ENCODE measurements at regions of chr4 and their contacts with region 1.

Region 1: GRCh38 chr4:127782274-127783025 is at the start of gene HSPA4L:
- DNase-seq: peak; percentile 64
- H3K4me3 Mint-ChIP-seq: peak within 1 kb of the TSS; percentile 91
- H3K27ac Mint-ChIP-seq: peak within 1 kb of the TSS; percentile 97
- H3K4me1 Mint-ChIP-seq: peaks cover 32% of the 10 kb centered on the region
- H3K27me3 Mint-ChIP-seq: peaks cover 65% of the 10 kb centered on the region
- total RNA-seq, gene HSPA4L: 2.5 and 3.8 TPM in 2 replicates

Region 2: GRCh38 chr4:127622921-127623656 is 159.4 kb before region 1 on chr4:
- intact Hi-C with region 1: loop called (anchors 5 kb)
- DNase-seq: no peak
- H3K4me3 Mint-ChIP-seq: no peak overlapping the region
- H3K27ac Mint-ChIP-seq: no peak overlapping the region
- H3K4me1 Mint-ChIP-seq: peaks cover 7% of the 10 kb centered on the region
- H3K27me3 Mint-ChIP-seq: peaks cover 29% of the 10 kb centered on the region

Region 3: DNA sequence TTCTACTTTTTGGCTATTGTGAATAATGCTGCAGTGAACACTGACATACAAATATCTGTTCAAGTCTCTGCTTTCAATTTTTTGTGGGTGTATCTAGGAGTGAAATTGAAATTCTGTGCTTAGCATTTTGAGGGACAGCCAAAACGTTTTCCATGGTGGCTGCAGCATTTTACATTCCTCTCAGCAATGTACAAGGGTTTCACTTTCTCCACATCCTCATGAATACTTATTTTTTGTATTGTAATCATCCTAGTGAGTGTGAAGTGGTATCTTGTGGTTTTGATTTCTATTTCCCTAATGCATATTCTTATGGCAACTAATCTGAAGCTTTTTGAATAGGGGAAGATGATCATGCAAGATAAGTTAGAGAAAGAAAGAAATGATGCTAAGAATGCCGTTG is 40.0 kb after region 1 on chr4:
- intact Hi-C with region 1: no loop called
- DNase-seq: no peak
- H3K4me3 Mint-ChIP-seq: no peak overlapping the region
- H3K27ac Mint-ChIP-seq: no peak overlapping the region
- H3K4me1 Mint-ChIP-seq: no peaks in the 10 kb centered on the region
- H3K27me3 Mint-ChIP-seq: no peaks in the 10 kb centered on the region

Region 4: GRCh38 chr4:127880764-127881562 is 98.5 kb after region 1 on chr4 and contains the start of gene PLK4:
- intact Hi-C with region 1: loop called (anchors 1 kb)
- DNase-seq: peak; percentile 96
- H3K4me3 Mint-ChIP-seq: peak within 1 kb of the TSS; percentile 91
- H3K27ac Mint-ChIP-seq: peak within 1 kb of the TSS; percentile 91
- H3K4me1 Mint-ChIP-seq: peaks cover 31% of the 10 kb centered on the region
- H3K27me3 Mint-ChIP-seq: no peaks in the 10 kb centered on the region
- total RNA-seq, gene PLK4: 40.7 and 41.2 TPM in 2 replicates

Region 5: DNA sequence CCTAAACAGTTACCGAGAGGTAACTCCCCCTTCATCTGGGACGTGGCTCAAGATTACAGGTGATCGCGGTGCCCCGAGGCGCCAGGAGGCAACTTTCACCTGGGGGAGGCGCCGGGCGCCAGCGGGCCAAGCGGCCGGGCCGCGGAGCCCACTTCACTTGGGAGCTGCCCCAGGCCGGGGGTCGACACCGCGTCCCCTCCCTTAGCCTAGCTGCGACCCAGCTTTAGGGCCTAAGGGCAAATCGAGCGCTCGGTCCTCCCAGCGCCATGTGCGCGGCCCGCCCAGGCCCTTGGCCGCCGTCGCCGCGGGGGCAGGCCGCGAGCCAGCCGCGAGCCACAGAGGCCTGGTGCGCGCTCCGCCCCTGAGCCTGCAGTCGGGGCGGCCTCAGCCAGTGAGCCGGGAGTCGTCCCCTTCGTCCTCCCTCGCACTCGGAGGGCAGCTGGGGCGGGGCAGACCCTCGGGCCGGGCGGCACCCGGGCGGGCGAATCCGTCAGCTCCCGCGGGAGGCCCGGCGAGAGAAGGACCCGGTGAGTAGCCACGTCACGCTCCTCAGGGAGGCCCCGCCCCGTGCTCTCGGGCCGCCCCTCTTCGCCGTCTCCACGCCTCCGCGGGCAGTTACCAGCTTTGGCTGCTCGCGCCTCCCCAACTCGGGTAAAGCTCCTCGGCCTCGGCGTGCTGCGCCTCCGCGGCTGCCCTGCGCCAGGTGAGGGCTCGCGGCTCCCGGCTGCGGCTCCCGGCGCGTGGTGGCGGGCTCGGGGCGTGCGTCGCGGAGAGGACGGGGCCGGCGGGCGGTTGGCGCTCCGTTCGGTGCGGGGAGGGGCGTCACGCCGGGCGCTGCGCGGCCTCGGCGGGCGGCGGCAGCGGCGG is 278.5 kb after region 1 on chr4 and contains the start of gene LARP1B:
- intact Hi-C with region 1: loop called (anchors 2 kb)
- DNase-seq: peak; percentile 93
- H3K4me3 Mint-ChIP-seq: peak within 1 kb of the TSS; percentile 88
- H3K27ac Mint-ChIP-seq: peak within 1 kb of the TSS; percentile 95
- H3K4me1 Mint-ChIP-seq: peaks cover 6% of the 10 kb centered on the region
- H3K27me3 Mint-ChIP-seq: no peaks in the 10 kb centered on the region
- total RNA-seq, gene LARP1B: 33.3 and 34.5 TPM in 2 replicates

Region 6: GRCh38 chr4:128177498-128177897 is 395.0 kb after region 1 on chr4:
- intact Hi-C with region 1: loop called (anchors 10 kb)
- DNase-seq: no peak
- H3K4me3 Mint-ChIP-seq: no peak overlapping the region
- H3K27ac Mint-ChIP-seq: no peak overlapping the region
- H3K4me1 Mint-ChIP-seq: peaks cover 8% of the 10 kb centered on the region
- H3K27me3 Mint-ChIP-seq: no peaks in the 10 kb centered on the region

Measured in activated T-helper 1 cell treated with anti-CD3 and anti-CD28 coated beads, Interleukin-12 subunit alpha, Interleukin-12 subunit beta, Interleukin-2, Interleukin-4 antibody, amounts not matched to agents 30 ng/mL and 10 ng/mL and 1 ng/mL, durations not matched to agents 14 hours and 24 hours and 36 hours (primary cell).